Naive thymus-derived CD8-positive, alpha-beta T cell (primary cell): ENCODE measurements at regions of chr16 and their contacts with region 1.

Region 1: DNA sequence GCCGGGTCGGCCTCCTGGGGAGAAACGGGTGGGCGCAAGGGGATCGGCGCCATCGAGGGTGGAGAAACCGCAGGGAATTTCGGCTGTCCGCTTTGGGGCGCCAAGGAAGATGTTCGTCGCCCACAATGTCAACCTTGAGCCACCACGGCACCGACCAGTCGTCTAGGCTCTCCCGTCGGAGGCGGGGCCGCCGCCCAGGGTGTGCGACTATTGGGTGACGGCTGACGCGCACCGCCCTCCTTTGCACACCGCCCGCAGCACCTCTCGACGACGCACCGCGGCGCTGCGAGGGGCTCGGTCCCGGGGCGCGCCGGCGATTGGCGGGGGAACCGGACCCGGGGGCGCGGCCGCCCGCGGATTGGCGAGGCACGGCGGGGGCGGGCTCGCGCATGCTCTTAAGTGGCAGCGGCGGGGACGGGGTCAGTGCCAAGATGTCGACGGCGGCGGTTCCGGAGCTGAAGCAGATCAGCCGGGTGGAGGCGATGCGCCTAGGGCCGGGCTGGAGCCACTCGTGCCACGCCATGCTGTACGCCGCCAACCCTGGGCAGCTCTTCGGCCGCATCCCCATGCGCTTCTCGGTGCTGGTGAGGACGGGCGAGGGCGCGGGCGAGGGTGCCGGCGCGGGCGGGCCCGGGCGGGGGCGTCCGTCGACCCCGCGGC is at the start of gene NUDT16L1:
- DNase-seq: peak; percentile 93 to 99 (median 98)
- ATAC-seq: peak; percentile 90 to 93
- H3K4me3 Mint-ChIP-seq: peak within 1 kb of the TSS; percentile 81 to 92 (median 86)
- H3K27ac Mint-ChIP-seq: peak within 1 kb of the TSS; percentile 53 to 96 (median 89)
- H3K4me1 Mint-ChIP-seq: peaks cover 6 to 26% (median 19%) of the 10 kb centered on the region in 4 donors
- H3K27me3 Mint-ChIP-seq: no peaks in the 10 kb centered on the region
- polyA plus RNA-seq, gene NUDT16L1: 90.0 to 131 (median 119) TPM

Region 2: GRCh38 chr16:4616047-4616811 is 77.2 kb before region 1 on chr16:
- POLR2A ChIA-PET with region 1: interaction called, 34 read pairs
- DNase-seq: peak; percentile 92 to 100 (median 99)
- ATAC-seq: peak; percentile 87 to 92
- H3K4me3 Mint-ChIP-seq: peak overlapping the region; percentile 92 to 99 (median 95)
- H3K27ac Mint-ChIP-seq: peak overlapping the region; percentile 95 to 100 (median 100)
- H3K4me1 Mint-ChIP-seq: peaks cover 11 to 48% (median 39%) of the 10 kb centered on the region in 4 donors
- H3K27me3 Mint-ChIP-seq: no peaks in the 10 kb centered on the region

Region 3: GRCh38 chr16:4624015-4624826 is 69.2 kb before region 1 on chr16 and contains the start of gene MGRN1:
- POLR2A ChIA-PET with region 1: interaction called, 22 read pairs
- DNase-seq: peak; percentile 87 to 94 (median 90)
- ATAC-seq: peak; percentile 90 to 92
- H3K4me3 Mint-ChIP-seq: peak within 1 kb of the TSS; percentile 91 to 96 (median 94)
- H3K27ac Mint-ChIP-seq: peak within 1 kb of the TSS; percentile 95 to 99 (median 98)
- H3K4me1 Mint-ChIP-seq: peaks cover 20 to 43% (median 32%) of the 10 kb centered on the region in 4 donors
- H3K27me3 Mint-ChIP-seq: no peaks in the 10 kb centered on the region
- polyA plus RNA-seq, gene MGRN1: 4.5 to 5.8 (median 5.6) TPM

Region 4: GRCh38 chr16:4660454-4661007 is 32.9 kb before region 1 on chr16:
- POLR2A ChIA-PET with region 1: interaction called, 17 read pairs
- DNase-seq: peak in 9 of 10 donors; percentile 57 to 86 (median 76)
- ATAC-seq: peak; percentile 49 to 67
- H3K4me3 Mint-ChIP-seq: peak overlapping the region; percentile 36 to 73 (median 59)
- H3K27ac Mint-ChIP-seq: peak overlapping the region; percentile 79 to 98 (median 94)
- H3K4me1 Mint-ChIP-seq: peaks cover 21 to 77% (median 63%) of the 10 kb centered on the region in 4 donors
- H3K27me3 Mint-ChIP-seq: no peaks in the 10 kb centered on the region

Region 5: DNA sequence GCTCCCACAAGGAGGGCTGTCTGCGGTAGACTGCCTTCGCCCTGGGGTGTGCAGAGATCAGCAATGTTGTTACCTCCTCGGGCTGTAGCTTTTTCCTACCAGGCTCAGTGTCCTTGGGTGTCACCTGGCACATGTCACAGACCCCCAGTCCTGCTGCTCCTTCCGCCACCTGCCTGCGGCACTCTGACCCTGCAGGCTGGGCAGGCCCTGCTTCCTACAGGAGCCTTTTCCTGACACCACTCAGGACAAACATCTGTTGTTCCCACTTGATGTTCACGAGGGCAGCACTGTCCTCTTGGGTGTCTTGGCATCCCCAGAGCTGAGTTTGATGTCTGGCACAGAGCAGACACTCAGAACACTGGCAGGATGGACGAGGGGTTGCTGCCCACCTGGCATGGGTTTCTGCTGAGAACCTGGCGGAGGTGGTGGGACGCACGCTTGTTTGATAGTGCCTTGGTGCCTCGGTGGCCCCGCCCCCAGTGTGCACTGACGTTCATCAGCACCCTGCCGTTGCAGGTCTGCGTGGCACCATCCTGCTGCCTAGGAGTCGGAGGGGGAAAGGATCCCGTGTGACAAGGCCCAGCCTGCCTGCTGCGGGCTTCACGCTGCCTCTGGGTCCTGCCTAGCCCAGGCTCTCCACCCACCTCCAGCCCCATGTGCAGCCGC is 26.8 kb before region 1 on chr16:
- POLR2A ChIA-PET with region 1: interaction called, 15 read pairs
- DNase-seq: no peak
- ATAC-seq: no peak
- H3K4me3 Mint-ChIP-seq: peak overlapping the region in 2 of 10 donors; percentile 11 to 52
- H3K27ac Mint-ChIP-seq: peak overlapping the region in 7 of 10 donors; percentile 20 to 97 (median 69)
- H3K4me1 Mint-ChIP-seq: peaks cover 17 to 56% (median 40%) of the 10 kb centered on the region in 4 donors
- H3K27me3 Mint-ChIP-seq: no peaks in the 10 kb centered on the region

Region 6: GRCh38 chr16:4675864-4676786 is 17.3 kb before region 1 on chr16:
- POLR2A ChIA-PET with region 1: interaction called, 63 read pairs
- DNase-seq: peak; percentile 37 to 81 (median 71)
- ATAC-seq: peak; percentile 83 to 92
- H3K4me3 Mint-ChIP-seq: peak overlapping the region; percentile 61 to 86 (median 81)
- H3K27ac Mint-ChIP-seq: peak overlapping the region; percentile 96 to 99 (median 98)
- H3K4me1 Mint-ChIP-seq: peaks cover 15 to 50% (median 39%) of the 10 kb centered on the region in 4 donors
- H3K27me3 Mint-ChIP-seq: no peaks in the 10 kb centered on the region

Region 7: DNA sequence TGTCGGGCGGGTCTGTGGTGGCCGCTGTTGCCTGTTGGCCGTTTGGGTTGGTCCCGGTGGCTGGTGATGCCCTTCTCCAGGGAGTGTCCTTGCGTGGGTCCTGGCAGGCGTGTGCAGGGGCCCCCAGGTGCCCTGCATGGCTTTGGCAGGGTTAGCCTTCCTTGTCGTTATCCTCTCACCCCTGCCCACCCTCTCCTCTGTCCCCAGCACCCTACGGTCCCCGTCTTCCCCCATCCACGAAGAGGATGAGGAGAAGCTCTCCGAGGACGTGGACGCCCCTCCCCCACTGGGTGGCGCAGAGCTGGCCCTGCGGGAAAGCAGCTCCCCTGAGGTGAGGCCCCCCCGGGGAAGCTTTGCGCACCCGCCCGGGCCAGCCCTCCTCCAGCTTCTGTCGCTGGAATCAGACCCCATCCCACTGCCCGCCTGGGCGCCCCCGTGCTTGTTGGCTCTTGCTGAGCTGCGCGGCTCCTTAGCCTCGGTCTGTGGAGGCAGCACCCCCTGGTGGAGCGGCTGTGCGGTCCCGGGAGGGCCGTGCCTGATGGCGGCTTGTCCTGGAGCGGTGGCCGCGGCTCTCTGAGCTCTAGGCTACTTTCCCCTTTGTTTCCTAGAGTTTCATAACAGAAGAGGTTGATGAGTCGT is 10.7 kb before region 1 on chr16:
- POLR2A ChIA-PET with region 1: interaction called, 63 read pairs
- DNase-seq: peak in 7 of 10 donors; percentile 40 to 73 (median 46)
- ATAC-seq: peak; percentile 38 to 40
- H3K4me3 Mint-ChIP-seq: peak overlapping the region in 2 of 10 donors; percentile 31 to 61
- H3K27ac Mint-ChIP-seq: peak overlapping the region in 4 of 10 donors; percentile 20 to 95 (median 56)
- H3K4me1 Mint-ChIP-seq: peaks cover 11 to 41% (median 26%) of the 10 kb centered on the region in 4 donors
- H3K27me3 Mint-ChIP-seq: no peaks in the 10 kb centered on the region

Region 8: DNA sequence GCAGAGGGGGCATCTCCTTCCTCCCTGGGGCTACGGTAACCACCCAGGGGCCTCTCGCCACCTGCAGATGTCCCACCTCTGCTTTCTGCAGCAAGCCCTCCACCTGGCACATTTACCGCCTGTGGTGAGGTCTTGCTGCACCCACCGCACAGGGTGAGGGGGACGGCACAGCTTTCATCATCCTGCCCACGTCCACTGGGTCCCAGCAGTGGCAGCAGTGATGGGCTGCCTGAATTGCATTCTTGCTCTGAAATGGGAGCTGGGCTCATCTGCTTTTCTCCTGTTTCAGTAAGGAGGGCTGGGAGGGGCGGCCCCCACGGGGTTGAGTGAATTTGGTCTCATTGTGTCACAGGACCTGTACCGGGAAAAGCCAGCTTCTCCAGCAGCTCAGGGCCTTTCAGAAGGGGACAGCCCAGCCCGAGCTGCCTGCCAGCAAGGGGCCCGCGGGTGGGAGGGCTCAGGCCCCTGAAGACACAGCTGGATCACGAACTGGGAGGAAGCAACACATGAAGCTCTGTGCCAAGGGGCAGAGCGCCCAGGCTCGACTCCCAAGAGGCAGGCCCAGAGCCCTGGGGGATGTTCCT is 53.7 kb after region 1 on chr16:
- POLR2A ChIA-PET with region 1: no interaction called
- DNase-seq: peak in 2 of 10 donors; percentile 14 to 24
- ATAC-seq: peak; percentile 33 to 45
- H3K4me3 Mint-ChIP-seq: peak overlapping the region in 7 of 10 donors; percentile 22 to 89 (median 67)
- H3K27ac Mint-ChIP-seq: peak overlapping the region; percentile 24 to 94 (median 86)
- H3K4me1 Mint-ChIP-seq: peaks cover 16 to 33% (median 24%) of the 10 kb centered on the region in 4 donors
- H3K27me3 Mint-ChIP-seq: no peaks in the 10 kb centered on the region